Adrenal gland (tissue), 19 donors: ENCODE measurements at regions of chr21 and their contacts with region 1.

Region 1: GRCh38 chr21:44949779-44950198 is 10.0 kb downstream of the SLX9 start:
- DNase-seq: peak; percentile 81 to 93 (median 90)
- H3K4me3 ChIP-seq: no peak overlapping the region
- H3K27ac ChIP-seq: peak overlapping the region in 1 of 5 donors; percentile 4
- H3K4me1 ChIP-seq: peaks cover 0 to 8% of the 10 kb centered on the region in 2 donors
- H3K27me3 ChIP-seq: no peaks in the 10 kb centered on the region
- CTCF ChIP-seq: peak; percentile 79 to 94 (median 91)
- POLR2A ChIP-seq: no peak

Region 2: DNA sequence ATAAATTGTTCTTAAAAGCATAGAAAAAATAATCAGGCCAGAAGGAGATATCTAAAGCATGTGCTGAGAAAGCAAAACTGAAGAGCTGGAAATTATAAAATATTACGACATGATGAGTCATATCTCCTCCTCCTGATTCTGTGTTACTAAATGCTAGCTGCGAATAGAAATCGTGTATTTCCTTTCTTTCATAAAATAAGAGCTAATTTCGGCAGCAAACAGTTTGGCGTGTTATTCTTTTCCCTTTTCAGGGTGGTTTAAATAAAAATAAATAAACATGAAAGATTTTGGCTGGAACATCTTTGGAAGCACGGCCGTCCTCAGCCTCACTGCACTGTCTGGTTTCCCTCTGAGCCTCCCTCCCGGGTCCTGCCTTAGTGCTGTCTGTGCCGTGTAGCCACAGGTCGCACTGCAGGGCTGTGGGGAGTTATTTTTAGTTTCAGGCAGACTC is 180.6 kb after region 1 on chr21:
- intact Hi-C with region 1: loop called (anchors 2 to 5 kb)
- DNase-seq: peak in 6 of 7 donors; percentile 49 to 81 (median 71)
- H3K4me3 ChIP-seq: peak overlapping the region in 2 of 4 donors; percentile 14 to 42
- H3K27ac ChIP-seq: peak overlapping the region; percentile 42 to 90 (median 81)
- H3K4me1 ChIP-seq: peaks cover 23 to 56% of the 10 kb centered on the region in 2 donors
- H3K27me3 ChIP-seq: no peaks in the 10 kb centered on the region
- CTCF ChIP-seq: no peak
- POLR2A ChIP-seq: peak in 1 of 2 donors; percentile 73

Region 3: DNA sequence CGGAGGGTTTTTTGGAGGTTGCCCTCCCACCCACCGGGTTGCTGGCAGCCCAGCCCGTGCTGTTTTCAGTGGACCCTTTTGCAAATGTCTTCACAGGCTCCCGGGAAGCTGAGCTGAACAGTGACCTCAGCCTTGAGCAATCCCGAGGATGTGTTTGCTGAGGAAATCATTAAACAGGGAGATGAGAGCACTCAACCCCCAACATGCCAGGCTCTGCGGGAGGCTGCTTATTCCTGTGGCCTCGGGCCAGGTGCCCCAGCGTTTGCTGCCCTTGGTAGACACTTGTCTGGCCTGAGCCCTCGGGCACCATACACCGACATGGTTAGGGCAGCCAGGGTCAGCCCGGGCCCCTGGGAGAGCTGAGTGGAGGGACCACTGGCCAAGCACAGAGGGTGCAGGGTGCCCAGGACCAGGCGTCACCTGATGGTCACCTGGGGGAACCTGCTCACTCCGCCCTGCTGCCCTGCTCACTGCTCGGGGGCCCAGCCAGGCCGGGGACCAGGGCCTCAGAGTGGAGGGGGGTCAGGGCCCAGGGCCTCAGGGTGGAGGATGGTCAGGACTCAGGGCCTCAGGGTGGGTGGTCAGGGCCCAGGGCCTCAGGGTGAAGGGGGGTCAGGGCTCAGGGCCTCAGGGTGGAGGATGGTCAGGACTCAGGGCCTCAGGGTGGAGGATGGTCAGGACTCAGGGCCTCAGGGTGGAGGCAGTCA is 380.4 kb after region 1 on chr21:
- intact Hi-C with region 1: no loop called
- DNase-seq: peak in 2 of 7 donors; percentile 22 to 24
- H3K4me3 ChIP-seq: no peak overlapping the region
- H3K27ac ChIP-seq: peak overlapping the region in 1 of 5 donors; percentile 71
- H3K4me1 ChIP-seq: no peaks in the 10 kb centered on the region
- H3K27me3 ChIP-seq: no peaks in the 10 kb centered on the region
- CTCF ChIP-seq: no peak
- POLR2A ChIP-seq: no peak